ENCODE measurements at regions of chr15 and their contacts with region 1.

Region 1: GRCh38 chr15:97350813-97351212 is 609.7 kb upstream of the ARRDC4 start:
- DNase-seq: no peak
- H3K4me3 ChIP-seq: no peak overlapping the region
- H3K27ac ChIP-seq: no peak overlapping the region
- H3K4me1 ChIP-seq: no peaks in the 10 kb centered on the region
- H3K27me3 ChIP-seq: no peaks in the 10 kb centered on the region
- CTCF ChIP-seq: no peak
- EP300 ChIP-seq: no peak
- POLR2A ChIP-seq: no peak

Region 2: GRCh38 chr15:97648728-97649127 is 297.9 kb after region 1 on chr15:
- intact Hi-C with region 1: loop called in 1 of 4 experiments (anchors 5 kb)
- DNase-seq: no peak
- H3K4me3 ChIP-seq: no peak overlapping the region
- H3K27ac ChIP-seq: no peak overlapping the region
- H3K4me1 ChIP-seq: no peaks in the 10 kb centered on the region
- H3K27me3 ChIP-seq: no peaks in the 10 kb centered on the region
- CTCF ChIP-seq: no peak
- EP300 ChIP-seq: no peak
- POLR2A ChIP-seq: no peak